Sigmoid colon (tissue), 7 donors: ENCODE measurements at regions of chr11 and their contacts with region 1.

Region 1: GRCh38 chr11:14249121-14249963 is 109.6 kb downstream of the RRAS2 start:
- DNase-seq: peak; percentile 78
- H3K4me3 ChIP-seq: no peak overlapping the region
- H3K27ac ChIP-seq: no peak overlapping the region
- H3K4me1 ChIP-seq: peaks cover 0 to 5% (median 0%) of the 10 kb centered on the region in 4 donors
- H3K27me3 ChIP-seq: peaks cover 0 to 8% (median 0%) of the 10 kb centered on the region in 3 donors
- CTCF ChIP-seq: peak; percentile 74 to 87 (median 82)
- EP300 ChIP-seq: no peak
- POLR2A ChIP-seq: no peak

Region 2: DNA sequence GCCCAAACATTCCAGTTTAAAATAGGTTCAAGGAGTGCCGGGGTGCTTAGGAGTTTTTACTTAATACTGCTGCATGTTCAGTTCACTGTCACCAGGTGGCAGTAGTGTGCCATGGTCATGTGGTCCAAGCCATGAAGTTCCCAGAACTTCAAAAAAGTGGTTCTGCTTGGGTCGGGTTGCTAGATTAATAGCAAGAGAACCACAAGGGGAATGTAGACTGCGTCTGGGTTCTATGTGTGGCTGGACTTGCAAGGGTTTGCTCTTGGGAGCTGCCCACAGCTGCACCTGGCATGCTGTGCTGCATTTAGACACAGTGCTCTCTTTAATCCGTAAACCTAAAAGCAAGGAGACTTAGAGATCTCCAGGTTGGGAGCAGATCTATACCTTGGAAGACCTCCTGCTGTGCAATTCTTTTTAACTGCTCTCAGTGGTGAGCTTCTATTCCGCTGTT is 293.3 kb before region 1 on chr11:
- intact Hi-C with region 1: loop called (anchors 1 kb)
- DNase-seq: peak; percentile 83
- H3K4me3 ChIP-seq: no peak overlapping the region
- H3K27ac ChIP-seq: no peak overlapping the region
- H3K4me1 ChIP-seq: peaks cover 0 to 3% (median 0%) of the 10 kb centered on the region in 4 donors
- H3K27me3 ChIP-seq: peaks cover 0 to 17% (median 7%) of the 10 kb centered on the region in 3 donors
- CTCF ChIP-seq: peak; percentile 79 to 93 (median 89)
- EP300 ChIP-seq: no peak
- POLR2A ChIP-seq: no peak

Region 3: DNA sequence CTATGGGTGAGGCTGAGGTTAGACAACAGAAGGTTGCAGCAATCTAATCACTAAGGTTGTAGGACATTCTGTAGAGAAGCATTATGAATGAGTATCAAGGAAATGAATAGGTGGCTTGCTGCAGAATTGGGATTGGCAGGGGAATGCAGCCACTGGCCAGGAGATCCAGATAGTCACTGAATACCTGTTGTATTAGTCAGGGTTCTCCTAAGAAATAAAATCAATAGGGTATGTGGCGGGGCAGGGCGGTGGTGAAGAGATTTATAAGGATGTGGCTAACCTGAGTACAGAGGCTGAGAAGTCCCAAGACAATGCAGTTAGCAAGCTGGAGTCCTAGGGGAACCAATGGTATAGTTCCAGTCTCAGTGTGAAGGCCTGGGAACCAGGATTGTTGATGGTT is 123.8 kb before region 1 on chr11:
- intact Hi-C with region 1: no loop called
- DNase-seq: no peak
- H3K4me3 ChIP-seq: no peak overlapping the region
- H3K27ac ChIP-seq: no peak overlapping the region
- H3K4me1 ChIP-seq: peaks cover 0 to 12% (median 4%) of the 10 kb centered on the region in 4 donors
- H3K27me3 ChIP-seq: no peaks in the 10 kb centered on the region
- CTCF ChIP-seq: no peak
- EP300 ChIP-seq: no peak
- POLR2A ChIP-seq: no peak

Region 4: GRCh38 chr11:14148653-14149273 is 100.6 kb before region 1 on chr11:
- intact Hi-C with region 1: loop called (anchors 5 kb)
- DNase-seq: no peak
- H3K4me3 ChIP-seq: no peak overlapping the region
- H3K27ac ChIP-seq: no peak overlapping the region
- H3K4me1 ChIP-seq: no peaks in the 10 kb centered on the region
- H3K27me3 ChIP-seq: no peaks in the 10 kb centered on the region
- CTCF ChIP-seq: peak in 2 of 4 experiments; percentile 53 to 61
- EP300 ChIP-seq: no peak
- POLR2A ChIP-seq: no peak